Activated CD4-positive, alpha-beta T cell treated with anti-CD3 and anti-CD28 coated beads, Interleukin-2, amount 10 ng/mL, durations not matched to agents 7 days and 5 days (primary cell): ENCODE measurements at regions of chr1 and their contacts with region 1.

Region 1: DNA sequence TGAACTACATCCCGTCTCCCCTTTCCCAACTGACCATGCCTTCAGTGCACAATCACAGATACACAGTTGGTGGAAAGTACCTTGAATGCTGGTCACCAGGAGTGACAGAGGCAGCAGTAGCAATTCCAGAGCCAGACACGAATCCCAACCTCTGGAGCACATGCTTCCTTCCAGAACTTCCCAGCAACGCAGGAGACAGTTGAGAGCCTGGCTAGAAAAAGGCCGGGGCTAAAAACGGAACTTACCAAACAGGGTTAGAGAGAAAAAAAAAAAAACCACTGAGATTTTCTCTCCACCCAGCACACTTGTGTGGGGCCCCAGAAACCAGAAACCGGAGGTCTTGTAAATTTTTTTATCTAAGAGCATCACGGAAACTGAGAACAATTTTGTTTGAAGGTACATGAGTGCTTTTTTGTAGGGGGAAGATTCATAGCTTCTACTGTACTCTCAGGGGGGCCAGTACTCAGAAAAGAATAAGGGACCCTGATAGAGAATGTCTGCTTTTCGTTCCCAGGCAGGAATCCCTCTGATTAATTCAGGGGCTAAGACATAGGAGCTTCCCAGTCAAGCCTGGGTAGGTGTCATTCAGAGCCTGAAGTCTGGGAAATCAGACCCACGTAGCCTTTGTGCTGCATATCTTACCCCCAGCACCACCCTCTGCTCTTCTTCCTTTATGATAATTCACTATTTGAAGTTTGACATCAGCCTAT is at the start of gene CD48:
- DNase-seq: peak; percentile 71
- H3K4me3 Mint-ChIP-seq: no peak within 1 kb of the TSS
- H3K27ac Mint-ChIP-seq: no peak within 1 kb of the TSS
- H3K4me1 Mint-ChIP-seq: peaks cover 37% of the 10 kb centered on the region
- H3K27me3 Mint-ChIP-seq: no peaks in the 10 kb centered on the region
- total RNA-seq, gene CD48: 294 to 309 TPM

Region 2: DNA sequence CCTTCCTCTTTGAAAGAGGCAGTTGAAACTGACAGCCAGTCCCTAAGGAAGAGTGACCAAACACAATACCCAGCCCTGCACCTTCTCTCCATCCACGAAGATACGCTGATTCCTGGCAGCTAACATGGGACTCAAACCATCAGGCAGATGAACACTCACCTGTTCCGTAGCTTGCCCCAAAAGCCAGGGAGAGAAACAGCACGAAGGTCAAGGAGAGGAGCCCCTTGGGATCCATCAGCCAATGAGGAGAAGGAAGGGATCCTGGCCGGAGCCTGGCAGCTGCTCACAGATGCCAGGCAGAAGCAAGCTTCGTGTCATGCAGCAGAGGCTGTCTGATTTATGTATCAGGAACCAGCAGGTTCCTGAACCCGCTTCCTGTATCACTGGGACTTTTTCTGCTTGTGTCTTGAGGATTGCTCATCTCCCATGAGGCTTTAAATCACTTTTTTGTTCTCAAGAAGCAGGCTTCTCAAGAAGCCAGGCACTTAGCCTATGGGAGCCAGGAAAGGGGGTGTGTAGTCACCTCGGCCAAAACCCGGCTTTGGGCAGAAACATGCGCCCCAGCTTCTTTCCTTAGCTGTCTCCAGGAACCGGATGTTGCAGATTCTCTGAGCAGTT is 64.9 kb before region 1 on chr1 and contains the start of gene SLAMF1:
- CTCF ChIA-PET with region 1: no interaction called
- POLR2A ChIA-PET with region 1: no interaction called
- DNase-seq: peak; percentile 48
- H3K4me3 Mint-ChIP-seq: peak within 1 kb of the TSS; percentile 93
- H3K27ac Mint-ChIP-seq: peak within 1 kb of the TSS; percentile 93
- H3K4me1 Mint-ChIP-seq: peaks cover 66% of the 10 kb centered on the region
- H3K27me3 Mint-ChIP-seq: no peaks in the 10 kb centered on the region
- total RNA-seq, gene SLAMF1: 70.4 to 70.6 TPM

Region 3: DNA sequence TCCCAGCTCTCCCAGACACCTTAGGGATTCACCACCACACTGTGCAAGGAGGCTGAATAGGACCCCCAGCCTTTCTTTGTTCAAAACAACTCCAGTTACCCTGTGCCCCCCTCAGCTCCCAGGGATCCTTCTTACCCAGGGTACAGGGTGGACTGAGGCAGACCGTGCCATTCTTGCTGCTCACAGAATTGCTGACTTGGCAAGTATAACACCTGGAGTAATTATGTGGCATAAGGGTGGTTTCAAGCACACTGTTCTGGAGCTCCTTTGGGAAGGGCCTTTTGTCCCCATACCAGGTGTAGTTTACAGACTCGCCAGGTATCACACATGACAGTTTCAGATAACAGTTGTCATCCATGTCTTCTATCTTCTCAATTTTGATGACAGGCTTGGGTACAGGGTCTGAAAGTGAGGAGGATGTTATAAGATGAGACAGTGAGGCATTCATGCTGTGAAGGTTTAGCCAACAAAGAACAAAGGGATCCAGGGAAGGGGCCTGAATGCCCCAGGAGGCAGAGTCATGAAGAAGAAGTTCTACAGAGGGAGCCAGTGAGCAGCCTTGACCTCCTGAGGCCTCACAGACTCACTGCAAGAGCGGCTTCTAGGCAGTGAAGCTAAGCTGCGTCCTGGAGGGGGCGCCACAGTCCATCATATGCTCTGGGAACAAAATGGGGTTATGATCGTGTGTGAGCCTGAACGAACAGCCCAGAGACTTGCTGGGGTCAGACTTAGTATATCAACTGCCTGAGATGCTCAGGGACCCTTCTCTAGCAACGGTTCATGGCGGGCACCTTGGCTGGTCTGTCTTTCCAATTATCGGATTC is 30.5 kb before region 1 on chr1:
- CTCF ChIA-PET with region 1: interaction called, 23 read pairs
- POLR2A ChIA-PET with region 1: interaction called, 7 read pairs
- DNase-seq: peak; percentile 90
- H3K4me3 Mint-ChIP-seq: no peak overlapping the region
- H3K27ac Mint-ChIP-seq: peak overlapping the region; percentile 91
- H3K4me1 Mint-ChIP-seq: peaks cover 71% of the 10 kb centered on the region
- H3K27me3 Mint-ChIP-seq: no peaks in the 10 kb centered on the region

Region 4: DNA sequence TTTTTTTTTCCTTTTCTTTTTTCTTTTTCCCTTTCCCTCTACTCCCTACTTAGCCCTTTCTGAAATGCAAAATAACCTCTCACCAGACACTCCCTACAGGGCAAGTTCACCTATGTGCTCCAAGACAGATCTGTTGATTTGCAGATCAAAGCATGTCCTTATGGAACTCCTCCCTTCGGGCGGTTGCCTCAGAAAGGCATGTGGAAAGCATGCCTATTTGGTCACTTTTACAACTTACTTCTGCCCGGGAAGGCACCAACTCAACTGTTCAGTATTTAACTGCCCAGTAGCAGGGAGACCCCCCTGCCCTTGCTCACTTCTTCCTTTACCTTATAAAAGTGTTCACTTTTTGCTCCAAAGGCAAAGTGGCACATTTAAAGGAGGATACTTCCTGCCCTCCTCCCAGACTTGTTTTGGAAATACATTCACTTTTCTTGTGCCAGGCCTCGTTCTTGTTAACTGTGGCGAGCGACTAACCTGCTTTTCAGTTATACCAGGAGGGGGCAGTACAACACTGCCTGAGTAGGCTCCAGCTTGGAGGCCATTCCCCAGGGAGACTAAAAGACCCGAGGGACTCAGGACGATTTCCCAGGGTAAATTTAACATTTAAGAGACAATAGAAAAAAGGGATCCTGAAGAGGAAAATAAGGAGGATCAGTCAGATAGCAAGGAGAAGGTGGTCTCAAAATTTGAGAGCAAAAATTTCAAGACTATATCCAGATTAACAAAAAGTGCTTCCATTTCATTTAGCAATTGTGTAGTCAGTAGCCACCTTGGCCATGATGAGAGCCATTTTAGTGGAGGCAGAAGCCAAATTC is 14.9 kb after region 1 on chr1:
- CTCF ChIA-PET with region 1: interaction called, 11 read pairs
- POLR2A ChIA-PET with region 1: interaction called, 3 read pairs
- DNase-seq: peak; percentile 79
- H3K4me3 Mint-ChIP-seq: no peak overlapping the region
- H3K27ac Mint-ChIP-seq: no peak overlapping the region
- H3K4me1 Mint-ChIP-seq: peaks cover 24% of the 10 kb centered on the region
- H3K27me3 Mint-ChIP-seq: no peaks in the 10 kb centered on the region

Region 5: GRCh38 chr1:160748181-160748877 is 36.6 kb after region 1 on chr1:
- CTCF ChIA-PET with region 1: interaction called, 10 read pairs
- POLR2A ChIA-PET with region 1: no interaction called
- DNase-seq: no peak
- H3K4me3 Mint-ChIP-seq: no peak overlapping the region
- H3K27ac Mint-ChIP-seq: no peak overlapping the region
- H3K4me1 Mint-ChIP-seq: peaks cover 84% of the 10 kb centered on the region
- H3K27me3 Mint-ChIP-seq: no peaks in the 10 kb centered on the region